ENCODE measurements at regions of chr3 and their contacts with region 1.

Region 1: DNA sequence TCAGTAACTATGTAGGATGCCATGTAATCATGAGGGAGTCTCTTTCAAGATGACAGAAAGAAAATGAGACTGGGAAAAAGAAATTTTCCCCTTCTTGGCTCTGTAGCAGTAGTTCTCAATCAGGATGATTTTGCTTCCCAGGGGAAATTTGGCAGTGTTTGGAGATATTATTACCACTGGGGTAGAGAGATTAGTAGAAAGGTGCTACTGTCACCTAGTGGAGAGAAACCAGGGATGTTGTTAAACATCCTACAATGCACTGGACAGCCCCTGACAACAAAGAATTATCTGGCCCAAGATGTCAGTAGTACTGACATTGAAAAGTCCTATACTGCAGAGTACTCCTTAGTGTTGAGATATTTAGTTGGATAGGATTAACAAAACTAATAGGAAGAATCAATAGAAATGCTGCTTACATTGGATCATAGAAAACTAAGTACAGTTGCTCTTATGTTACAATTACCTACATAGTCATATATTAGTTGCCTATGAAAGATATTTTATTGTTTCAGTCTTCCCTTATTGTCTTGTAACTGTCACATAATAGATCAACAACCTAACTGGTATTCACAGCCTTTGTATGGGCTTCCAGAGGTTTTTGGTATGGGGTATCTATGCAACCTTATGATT is 433.3 kb downstream of the RAP2B start:
- DNase-seq: peak in 1 of 2 donors; percentile 51
- ATAC-seq: peak in 2 of 3 donors; percentile 70 to 72
- H3K4me3 ChIP-seq: no peak overlapping the region
- H3K4me3 Mint-ChIP-seq: no peak overlapping the region
- H3K27ac ChIP-seq: no peak overlapping the region
- H3K27ac Mint-ChIP-seq: no peak overlapping the region
- H3K4me1 ChIP-seq: no peaks in the 10 kb centered on the region
- H3K4me1 Mint-ChIP-seq: no peaks in the 10 kb centered on the region
- H3K27me3 ChIP-seq: no peaks in the 10 kb centered on the region
- H3K27me3 Mint-ChIP-seq: no peaks in the 10 kb centered on the region
- CTCF ChIP-seq: peak; percentile 73

Region 2: GRCh38 chr3:153026026-153026425 is 569.3 kb before region 1 on chr3:
- intact Hi-C with region 1: loop called (anchors 1 kb)
- DNase-seq: peak in 1 of 2 donors; percentile 59
- ATAC-seq: peak in 2 of 3 donors; percentile 41 to 52
- H3K4me3 ChIP-seq: no peak overlapping the region
- H3K4me3 Mint-ChIP-seq: no peak overlapping the region
- H3K27ac ChIP-seq: no peak overlapping the region
- H3K27ac Mint-ChIP-seq: no peak overlapping the region
- H3K4me1 ChIP-seq: no peaks in the 10 kb centered on the region
- H3K4me1 Mint-ChIP-seq: no peaks in the 10 kb centered on the region
- H3K27me3 ChIP-seq: no peaks in the 10 kb centered on the region
- H3K27me3 Mint-ChIP-seq: peaks cover 0 to 2% of the 10 kb centered on the region in 2 donors
- CTCF ChIP-seq: peak; percentile 78

Region 3: DNA sequence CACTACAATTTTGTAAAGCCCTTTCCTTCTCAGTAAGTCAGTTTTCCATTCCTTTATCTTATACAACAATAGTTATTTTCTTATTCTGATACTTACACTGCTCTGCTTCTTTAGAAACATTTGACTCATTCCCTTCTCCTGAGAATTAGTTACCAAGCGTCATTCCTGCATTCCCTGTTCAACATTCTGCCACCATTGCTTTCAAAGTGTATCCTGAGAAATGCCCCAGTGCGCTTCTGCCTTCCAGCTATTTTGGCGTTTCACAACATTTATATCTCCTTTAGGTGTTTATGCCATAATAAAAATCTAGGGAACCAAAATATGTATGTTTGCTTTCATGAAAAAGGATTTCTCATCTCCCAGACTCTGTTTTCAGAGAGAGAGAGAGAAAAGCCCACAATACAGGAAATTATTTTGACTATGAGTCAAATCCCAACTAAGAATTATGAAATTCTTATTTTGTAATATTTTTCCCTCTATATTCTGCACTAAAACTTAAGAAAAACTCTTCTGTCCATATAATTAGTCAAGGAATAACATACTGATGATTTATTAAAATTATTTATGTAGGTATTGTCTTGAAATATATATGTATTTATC is 551.5 kb before region 1 on chr3:
- intact Hi-C with region 1: loop called (anchors 1 kb)
- DNase-seq: no peak
- ATAC-seq: no peak
- H3K4me3 ChIP-seq: no peak overlapping the region
- H3K4me3 Mint-ChIP-seq: no peak overlapping the region
- H3K27ac ChIP-seq: no peak overlapping the region
- H3K27ac Mint-ChIP-seq: no peak overlapping the region
- H3K4me1 ChIP-seq: peaks cover 2% of the 10 kb centered on the region
- H3K4me1 Mint-ChIP-seq: no peaks in the 10 kb centered on the region
- H3K27me3 ChIP-seq: no peaks in the 10 kb centered on the region
- H3K27me3 Mint-ChIP-seq: peaks cover 3 to 16% of the 10 kb centered on the region in 2 donors
- CTCF ChIP-seq: no peak

Region 4: DNA sequence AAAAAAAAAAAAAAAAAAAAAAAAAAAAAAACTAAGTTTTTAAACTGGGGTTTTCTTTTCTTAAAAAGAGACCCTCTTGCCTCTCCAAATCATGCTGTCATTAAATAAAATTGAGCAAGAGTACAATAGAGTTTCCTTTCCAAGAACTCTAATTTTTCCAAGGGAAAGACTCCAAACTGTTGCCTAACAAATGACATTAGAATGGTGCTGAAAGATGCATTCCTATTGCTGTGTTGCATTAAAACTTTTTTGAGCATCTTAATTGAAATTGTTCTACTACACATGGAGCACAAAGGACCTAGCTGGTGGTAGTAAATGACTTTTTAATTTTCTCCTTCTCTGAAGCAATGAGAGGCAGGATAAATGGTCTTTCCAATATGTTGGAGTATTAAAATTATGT is 56.8 kb after region 1 on chr3:
- intact Hi-C with region 1: no loop called
- DNase-seq: no peak
- ATAC-seq: no peak
- H3K4me3 ChIP-seq: no peak overlapping the region
- H3K4me3 Mint-ChIP-seq: no peak overlapping the region
- H3K27ac ChIP-seq: no peak overlapping the region
- H3K27ac Mint-ChIP-seq: no peak overlapping the region
- H3K4me1 ChIP-seq: no peaks in the 10 kb centered on the region
- H3K4me1 Mint-ChIP-seq: no peaks in the 10 kb centered on the region
- H3K27me3 ChIP-seq: no peaks in the 10 kb centered on the region
- H3K27me3 Mint-ChIP-seq: peaks cover 12 to 30% of the 10 kb centered on the region in 2 donors
- CTCF ChIP-seq: no peak